ENCODE measurements at regions of chr20 and their contacts with region 1.

Region 1: GRCh38 chr20:34312544-34313217 is 9.5 kb upstream of the AHCY start:
- DNase-seq: peak; percentile 97
- H3K4me3 Mint-ChIP-seq: peak overlapping the region; percentile 40
- H3K27ac Mint-ChIP-seq: no peak overlapping the region
- H3K4me1 Mint-ChIP-seq: peaks cover 14% of the 10 kb centered on the region
- H3K27me3 Mint-ChIP-seq: peaks cover 21% of the 10 kb centered on the region

Region 2: DNA sequence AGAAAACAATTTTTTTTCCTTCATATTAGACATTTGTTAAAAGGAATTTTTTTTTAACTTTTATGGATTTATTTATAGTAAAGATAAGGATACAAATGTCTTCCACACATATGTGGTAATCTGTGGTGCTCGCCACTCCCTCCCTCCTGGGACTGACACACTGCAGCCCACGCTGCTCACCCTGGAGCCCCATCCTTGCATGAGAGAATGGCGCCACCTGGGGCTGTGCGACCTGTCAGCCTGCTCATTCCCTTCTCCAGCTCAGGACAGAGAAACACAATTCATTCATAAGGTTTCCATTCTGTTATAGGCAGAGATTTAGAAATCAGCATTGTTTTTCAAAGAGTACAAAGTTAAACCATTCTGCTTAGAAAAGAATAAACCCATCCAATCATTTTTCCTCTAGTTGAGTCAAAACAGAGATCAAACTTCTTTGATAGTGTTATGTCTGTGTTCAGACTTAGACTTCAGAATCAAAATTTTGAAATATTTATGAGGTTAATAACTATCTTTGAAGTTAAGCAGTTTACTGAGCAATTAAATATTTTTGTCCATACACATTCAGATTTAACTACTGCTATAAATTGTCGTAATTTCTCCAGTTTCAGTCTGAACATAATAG is 160.7 kb after region 1 on chr20:
- intact Hi-C with region 1: loop called (anchors 1 kb)
- DNase-seq: peak; percentile 76
- H3K4me3 Mint-ChIP-seq: no peak overlapping the region
- H3K27ac Mint-ChIP-seq: no peak overlapping the region
- H3K4me1 Mint-ChIP-seq: peaks cover 8% of the 10 kb centered on the region
- H3K27me3 Mint-ChIP-seq: no peaks in the 10 kb centered on the region

Region 3: DNA sequence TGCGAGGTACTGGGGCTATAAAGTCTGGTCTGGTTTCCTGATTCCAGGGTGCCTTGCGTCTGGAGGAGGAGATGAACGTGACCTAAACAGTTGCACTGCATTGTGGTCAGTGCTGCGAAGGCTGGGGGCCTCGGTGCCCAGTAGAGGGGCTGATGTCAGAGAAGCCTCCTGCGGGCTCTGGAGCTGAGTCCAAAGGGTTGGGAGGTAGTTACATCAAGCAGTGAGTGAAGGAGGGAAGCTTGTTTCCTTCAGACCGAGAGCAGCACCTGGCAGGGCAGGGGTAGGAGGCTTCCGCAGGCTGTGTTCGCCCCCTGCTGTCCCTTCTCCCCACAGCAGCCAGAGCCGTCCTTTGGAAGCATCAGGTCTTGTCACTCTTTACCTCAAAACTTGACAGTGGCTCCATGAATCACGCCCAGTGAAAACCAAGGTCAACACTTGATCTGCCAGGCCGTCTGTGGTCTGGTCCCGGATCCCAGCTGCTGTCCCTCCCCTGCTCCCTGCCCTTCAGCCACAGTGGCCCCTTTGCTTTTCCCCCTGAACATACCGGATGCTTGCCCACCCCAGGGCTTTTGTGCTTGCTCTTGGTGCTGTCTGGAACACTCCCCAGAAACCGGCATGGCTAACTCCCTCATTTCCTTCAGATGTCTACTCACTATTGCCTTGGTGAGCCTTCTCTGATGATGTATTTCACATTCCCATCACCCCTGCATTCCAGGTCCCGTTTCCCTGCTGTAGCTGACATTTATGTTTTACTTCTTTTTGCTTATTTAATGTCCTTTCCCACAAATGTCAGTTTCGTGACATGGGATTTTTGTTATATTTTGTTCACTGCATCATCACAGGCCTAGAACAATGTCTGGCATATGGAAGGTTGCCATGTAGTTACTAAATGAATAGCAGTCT is 210.5 kb after region 1 on chr20:
- intact Hi-C with region 1: loop called (anchors 1 kb)
- DNase-seq: peak; percentile 84
- H3K4me3 Mint-ChIP-seq: no peak overlapping the region
- H3K27ac Mint-ChIP-seq: peak overlapping the region; percentile 41
- H3K4me1 Mint-ChIP-seq: peaks cover 21% of the 10 kb centered on the region
- H3K27me3 Mint-ChIP-seq: no peaks in the 10 kb centered on the region

Region 4: DNA sequence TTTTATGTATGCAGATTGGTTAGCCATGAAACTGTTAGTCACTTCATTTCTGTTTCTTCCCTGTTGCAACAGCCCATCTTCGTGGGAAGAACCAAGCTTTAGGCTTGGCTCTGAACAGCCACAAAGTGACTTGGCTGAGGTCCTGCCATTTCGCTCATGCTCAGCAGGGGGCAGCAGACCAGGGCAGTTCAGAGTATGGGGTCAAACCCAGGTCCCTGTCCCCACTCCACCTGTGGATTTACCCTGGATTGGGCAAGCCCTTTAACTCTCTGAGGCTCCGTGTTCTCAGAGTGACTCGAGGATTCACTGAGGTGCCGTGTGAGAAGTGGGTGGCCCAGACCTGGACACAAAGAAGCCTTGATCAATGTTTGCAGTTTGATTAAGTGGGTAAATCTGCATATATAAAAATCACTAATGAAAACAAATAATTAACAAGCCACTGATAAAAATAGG is 226.0 kb after region 1 on chr20:
- intact Hi-C with region 1: loop called (anchors 5 kb)
- DNase-seq: peak; percentile 90
- H3K4me3 Mint-ChIP-seq: no peak overlapping the region
- H3K27ac Mint-ChIP-seq: no peak overlapping the region
- H3K4me1 Mint-ChIP-seq: peaks cover 14% of the 10 kb centered on the region
- H3K27me3 Mint-ChIP-seq: no peaks in the 10 kb centered on the region

Measured in activated CD4-positive, alpha-beta T cell treated with anti-CD3 and anti-CD28 coated beads, Interleukin-2, amount 10 ng/mL, durations not matched to agents 24 days and 14 days (primary cell).